ENCODE measurements at regions of chr2 and their contacts with region 1.

Region 1: DNA sequence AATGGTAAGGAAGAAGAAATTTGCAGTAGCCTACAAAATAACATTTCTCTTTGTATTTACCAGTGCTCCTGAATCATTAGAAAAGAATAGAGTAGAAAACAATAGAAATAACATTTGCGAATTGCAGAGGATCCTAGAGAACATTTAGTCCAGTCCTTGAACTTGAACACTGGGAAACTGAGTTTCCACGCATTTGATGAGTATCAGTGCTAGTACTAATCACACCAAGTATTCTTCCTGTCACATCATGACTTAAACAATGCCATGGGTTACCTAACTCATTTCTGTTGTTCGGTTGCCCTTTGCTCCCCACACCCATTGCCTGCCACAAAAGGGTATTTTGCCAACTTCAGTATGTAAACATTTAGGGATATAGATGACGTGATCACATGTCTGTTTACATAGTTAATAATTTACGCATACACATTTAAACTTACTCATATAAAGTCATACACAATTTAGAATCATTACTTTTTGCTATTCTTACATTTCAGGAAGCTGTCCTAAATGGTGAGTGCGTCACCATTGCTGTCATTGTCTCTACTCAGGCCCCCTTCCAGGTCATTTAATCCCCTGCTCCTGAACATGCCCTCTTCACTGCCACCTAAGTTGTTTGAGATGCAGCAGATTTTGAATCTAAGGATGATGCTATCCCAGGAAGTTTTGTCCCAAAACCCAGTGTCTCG is 42.3 kb downstream of the CRIM1 start:
- DNase-seq: peak; percentile 58 to 98
- ATAC-seq: peak; percentile 59 to 72
- H3K4me3 ChIP-seq: peak overlapping the region; percentile 8; the same call in 1 of the 3 replicates
- H3K27ac ChIP-seq: peak overlapping the region; percentile 88 to 92
- H3K4me1 ChIP-seq: peaks cover 98% of the 10 kb centered on the region
- CTCF ChIP-seq: no peak
- EP300 ChIP-seq: peak; percentile 98; a peak in 4 of 5 replicates
- POLR2A ChIP-seq: no peak
- RAD21 ChIP-seq: peak; percentile 35 to 64; a peak in 4 of 5 replicates

Region 2: GRCh38 chr2:36376319-36376765 is 21.5 kb before region 1 on chr2:
- CTCF ChIA-PET with region 1: interaction called, 13 read pairs
- POLR2A ChIA-PET with region 1: interaction called, 6 read pairs
- DNase-seq: peak in 1 of 2 experiments; percentile 77
- ATAC-seq: peak; percentile 16 to 25; a peak in 4 of 6 replicates
- H3K4me3 ChIP-seq: peak overlapping the region; percentile 17
- H3K27ac ChIP-seq: peak overlapping the region; percentile 75 to 84
- H3K4me1 ChIP-seq: peaks cover 100% of the 10 kb centered on the region
- CTCF ChIP-seq: no peak
- EP300 ChIP-seq: no peak
- POLR2A ChIP-seq: no peak
- RAD21 ChIP-seq: no peak

Region 3: GRCh38 chr2:36539631-36540030 is 141.8 kb after region 1 on chr2:
- CTCF ChIA-PET with region 1: no interaction called
- POLR2A ChIA-PET with region 1: no interaction called
- DNase-seq: no peak
- ATAC-seq: peak in 1 of 2 experiments; percentile 15; a peak in 3 of 6 replicates
- H3K4me3 ChIP-seq: no peak overlapping the region
- H3K27ac ChIP-seq: peak overlapping the region in 1 of 2 experiments; percentile 0; a peak in 2 of 6 replicates
- H3K4me1 ChIP-seq: peaks cover 16% of the 10 kb centered on the region
- CTCF ChIP-seq: no peak
- EP300 ChIP-seq: no peak
- POLR2A ChIP-seq: no peak
- RAD21 ChIP-seq: no peak